Endothelial cell of umbilical vein (primary cell): ENCODE measurements at regions of chr2 and their contacts with region 1.

Region 1: DNA sequence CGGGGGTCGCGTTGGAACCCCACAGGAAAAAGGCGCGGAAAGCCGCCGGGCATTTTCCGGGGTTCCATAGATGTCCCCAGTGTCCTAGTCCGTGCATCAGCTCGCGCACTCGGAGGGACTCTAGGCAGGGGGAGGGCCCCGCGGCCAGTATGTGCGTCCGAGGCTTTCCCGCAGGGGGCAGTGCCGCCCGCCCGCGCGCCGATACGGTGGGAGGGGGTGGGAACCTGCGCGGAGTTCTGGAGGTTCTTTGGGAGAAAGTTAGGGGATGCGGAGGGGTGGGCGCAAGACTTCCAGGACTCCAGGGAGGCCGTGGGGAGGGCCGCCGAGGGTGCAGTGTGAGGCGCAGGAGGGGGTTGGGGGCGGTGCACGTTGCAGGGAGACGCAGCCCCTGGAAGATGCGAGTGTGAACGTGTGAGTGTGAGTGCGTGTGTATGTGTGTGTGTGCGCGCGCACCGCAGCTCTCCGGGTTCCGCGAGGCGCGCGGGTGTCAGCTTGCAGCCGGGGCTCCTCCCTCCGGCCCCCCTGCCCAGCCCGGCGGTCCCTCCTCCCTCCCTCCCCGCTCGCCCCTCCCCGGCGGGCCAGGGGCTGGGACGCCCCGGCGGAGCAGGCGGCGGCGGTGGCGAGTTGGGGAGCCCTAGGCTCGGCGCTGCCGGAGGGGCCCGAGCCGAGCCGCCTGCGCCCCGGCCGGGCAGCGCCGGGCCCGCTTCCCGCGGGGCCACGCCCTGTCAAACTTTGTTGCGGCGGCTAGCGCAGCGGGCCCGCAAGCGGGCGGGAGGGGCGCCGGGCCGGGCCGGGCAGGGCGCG is at the start of gene TCF7L1:
- DNase-seq: peak; percentile 91
- H3K4me3 ChIP-seq: peak within 1 kb of the TSS; percentile 74 to 95 (median 79)
- H3K27ac ChIP-seq: no peak within 1 kb of the TSS
- H3K4me1 ChIP-seq: peaks cover 13% of the 10 kb centered on the region
- H3K27me3 ChIP-seq: peaks cover 3 to 6% of the 10 kb centered on the region in 2 experiments
- CTCF ChIP-seq: peak; percentile 82 to 91
- POLR2A ChIP-seq: peak; percentile 36
- total RNA-seq, gene TCF7L1: 13.2 and 17.4 TPM in 2 replicates

Region 2: DNA sequence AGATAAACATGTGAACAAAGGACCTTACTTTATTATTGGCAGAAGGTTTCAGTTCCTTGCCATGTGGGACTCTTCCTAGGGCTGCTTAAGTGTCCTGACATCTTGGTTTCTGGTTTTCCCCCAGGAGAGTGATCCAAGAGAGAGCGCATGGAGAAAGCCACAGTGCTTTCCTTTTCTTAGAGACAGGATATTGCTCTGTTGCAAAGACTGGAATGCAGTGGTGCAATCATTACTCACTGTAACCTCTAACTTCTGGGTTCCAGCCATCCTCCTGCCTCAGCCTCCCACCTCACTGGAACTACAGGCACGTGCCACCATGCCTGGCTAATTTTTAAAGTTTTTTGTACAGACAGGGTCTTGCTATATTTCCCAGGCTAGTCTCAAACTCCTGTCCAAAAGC is 37.9 kb before region 1 on chr2:
- CTCF ChIA-PET with region 1: no interaction called
- POLR2A ChIA-PET with region 1: no interaction called
- dilution Hi-C with region 1: no loop called
- intact Hi-C with region 1: no loop called
- DNase-seq: no peak
- H3K4me3 ChIP-seq: no peak overlapping the region
- H3K27ac ChIP-seq: no peak overlapping the region
- H3K4me1 ChIP-seq: no peaks in the 10 kb centered on the region
- H3K27me3 ChIP-seq: peaks cover 3 to 6% of the 10 kb centered on the region in 2 experiments
- CTCF ChIP-seq: no peak
- POLR2A ChIP-seq: no peak

Region 3: GRCh38 chr2:85143463-85144082 is 10.5 kb after region 1 on chr2:
- CTCF ChIA-PET with region 1: interaction called, 13 read pairs
- POLR2A ChIA-PET with region 1: no interaction called
- dilution Hi-C with region 1: no loop called
- intact Hi-C with region 1: no loop called
- DNase-seq: no peak
- H3K4me3 ChIP-seq: no peak overlapping the region
- H3K27ac ChIP-seq: no peak overlapping the region
- H3K4me1 ChIP-seq: no peaks in the 10 kb centered on the region
- H3K27me3 ChIP-seq: no peaks in the 10 kb centered on the region
- CTCF ChIP-seq: no peak
- POLR2A ChIP-seq: no peak

Region 4: GRCh38 chr2:85243101-85244072 is 110.4 kb after region 1 on chr2:
- CTCF ChIA-PET with region 1: interaction called, 41 read pairs
- POLR2A ChIA-PET with region 1: no interaction called
- dilution Hi-C with region 1: no loop called
- intact Hi-C with region 1: loop called (anchors 1 kb)
- DNase-seq: peak; percentile 30
- H3K4me3 ChIP-seq: no peak overlapping the region
- H3K27ac ChIP-seq: no peak overlapping the region
- H3K4me1 ChIP-seq: peaks cover 15% of the 10 kb centered on the region
- H3K27me3 ChIP-seq: no peaks in the 10 kb centered on the region
- CTCF ChIP-seq: peak; percentile 55 to 70
- POLR2A ChIP-seq: no peak

Region 5: GRCh38 chr2:85266146-85267041 is 133.4 kb after region 1 on chr2:
- CTCF ChIA-PET with region 1: interaction called, 14 read pairs
- POLR2A ChIA-PET with region 1: no interaction called
- dilution Hi-C with region 1: no loop called
- intact Hi-C with region 1: loop called (anchors 1 kb)
- DNase-seq: peak; percentile 25
- H3K4me3 ChIP-seq: no peak overlapping the region
- H3K27ac ChIP-seq: no peak overlapping the region
- H3K4me1 ChIP-seq: peaks cover 39% of the 10 kb centered on the region
- H3K27me3 ChIP-seq: no peaks in the 10 kb centered on the region
- CTCF ChIP-seq: peak; percentile 74 to 89
- POLR2A ChIP-seq: no peak

Region 6: DNA sequence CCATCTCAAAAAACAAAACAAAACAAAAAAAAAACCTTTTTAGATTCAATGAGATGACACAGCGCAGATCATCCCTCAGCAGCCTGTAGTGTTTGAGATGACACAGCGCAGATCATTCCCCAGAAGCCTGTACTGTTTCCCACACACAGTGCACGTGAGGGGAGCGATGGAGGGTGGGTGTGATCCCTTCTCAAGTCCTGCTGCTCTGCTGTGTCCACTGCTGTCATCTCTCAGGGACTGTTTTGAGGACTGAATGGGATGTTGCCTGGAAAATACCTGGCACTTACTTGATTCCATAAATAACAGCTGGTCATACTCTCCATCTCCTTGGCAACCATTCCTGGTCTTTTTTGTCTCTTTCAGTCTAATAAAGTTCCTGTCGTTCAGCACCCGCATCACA is 169.1 kb after region 1 on chr2:
- CTCF ChIA-PET with region 1: interaction called, 101 read pairs
- POLR2A ChIA-PET with region 1: no interaction called
- dilution Hi-C with region 1: no loop called
- intact Hi-C with region 1: loop called (anchors 1 kb)
- DNase-seq: no peak
- H3K4me3 ChIP-seq: no peak overlapping the region
- H3K27ac ChIP-seq: no peak overlapping the region
- H3K4me1 ChIP-seq: no peaks in the 10 kb centered on the region
- H3K27me3 ChIP-seq: no peaks in the 10 kb centered on the region
- CTCF ChIP-seq: no peak
- POLR2A ChIP-seq: no peak